CD4-positive, alpha-beta memory T cell (primary cell): ENCODE measurements at regions of chr2 and their contacts with region 1.

Region 1: GRCh38 chr2:191051825-191052778 is 38.1 kb upstream of the STAT1 start:
- DNase-seq: peak in 4 of 5 donors; percentile 52 to 66 (median 62)
- H3K4me3 ChIP-seq: no peak overlapping the region
- H3K4me3 Mint-ChIP-seq: no peak overlapping the region
- H3K27ac ChIP-seq: no peak overlapping the region
- H3K27ac Mint-ChIP-seq: no peak overlapping the region
- H3K4me1 ChIP-seq: peaks cover 28% of the 10 kb centered on the region
- H3K4me1 Mint-ChIP-seq: peaks cover 15 to 23% (median 20%) of the 10 kb centered on the region in 4 donors
- H3K27me3 ChIP-seq: no peaks in the 10 kb centered on the region
- H3K27me3 Mint-ChIP-seq: no peaks in the 10 kb centered on the region

Region 2: DNA sequence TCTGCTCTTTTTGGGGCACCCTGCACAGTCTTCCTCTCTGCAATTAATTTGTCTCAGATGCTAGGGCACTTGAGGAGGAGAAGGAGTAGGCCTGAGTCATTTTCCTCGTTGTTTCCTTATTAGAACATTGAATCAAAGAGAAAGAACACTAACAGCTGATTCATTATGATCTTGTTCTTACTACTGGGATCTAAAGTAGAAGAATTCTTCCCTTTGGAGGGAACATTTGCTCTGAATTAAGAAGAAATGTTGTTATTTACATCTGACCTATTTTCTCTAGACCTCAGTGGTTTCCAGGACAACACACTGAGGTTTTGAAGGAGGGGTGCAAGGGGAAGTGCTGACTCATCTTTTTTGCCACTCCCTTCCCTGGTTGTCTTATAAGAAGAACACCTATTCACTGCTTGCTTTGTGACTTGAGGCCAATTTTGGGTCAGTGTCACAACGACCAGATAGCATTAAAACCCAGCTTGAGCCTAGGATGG is 13.8 kb before region 1 on chr2:
- CTCF ChIA-PET with region 1: interaction called, 60 read pairs
- POLR2A ChIA-PET with region 1: interaction called, 17 read pairs
- intact Hi-C with region 1: no loop called
- DNase-seq: peak; percentile 49 to 75 (median 63)
- H3K4me3 ChIP-seq: no peak overlapping the region
- H3K4me3 Mint-ChIP-seq: peak overlapping the region in 7 of 8 donors; percentile 33 to 84 (median 65)
- H3K27ac ChIP-seq: peak overlapping the region; percentile 39
- H3K27ac Mint-ChIP-seq: peak overlapping the region; percentile 87 to 98 (median 91)
- H3K4me1 ChIP-seq: peaks cover 31% of the 10 kb centered on the region
- H3K4me1 Mint-ChIP-seq: peaks cover 27 to 37% (median 36%) of the 10 kb centered on the region in 4 donors
- H3K27me3 ChIP-seq: no peaks in the 10 kb centered on the region
- H3K27me3 Mint-ChIP-seq: no peaks in the 10 kb centered on the region

Region 3: DNA sequence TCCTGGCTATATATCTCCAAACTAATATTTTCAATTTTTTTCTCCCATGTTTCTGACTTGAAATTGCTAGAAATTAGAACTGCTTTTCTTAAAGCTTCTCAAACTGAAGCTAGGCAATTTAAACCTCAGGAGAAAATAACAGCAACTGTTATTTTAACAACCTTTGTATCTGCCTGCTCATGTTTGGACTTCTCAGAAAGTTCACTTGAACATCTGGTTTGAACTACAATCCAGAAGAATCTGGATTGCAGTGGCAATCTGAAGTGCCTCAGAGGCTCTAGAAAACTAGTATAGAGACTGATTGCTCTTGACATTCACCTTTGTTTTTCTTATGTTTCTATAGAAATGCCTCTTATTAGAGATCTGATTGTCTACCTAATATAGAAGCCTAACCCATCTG is 34.6 kb after region 1 on chr2:
- CTCF ChIA-PET with region 1: interaction called, 29 read pairs
- POLR2A ChIA-PET with region 1: interaction called, 3 read pairs
- intact Hi-C with region 1: no loop called
- DNase-seq: no peak
- H3K4me3 ChIP-seq: no peak overlapping the region
- H3K4me3 Mint-ChIP-seq: peak overlapping the region in 1 of 8 donors; percentile 5
- H3K27ac ChIP-seq: no peak overlapping the region
- H3K27ac Mint-ChIP-seq: no peak overlapping the region
- H3K4me1 ChIP-seq: peaks cover 16% of the 10 kb centered on the region
- H3K4me1 Mint-ChIP-seq: peaks cover 19 to 41% (median 33%) of the 10 kb centered on the region in 4 donors
- H3K27me3 ChIP-seq: no peaks in the 10 kb centered on the region
- H3K27me3 Mint-ChIP-seq: no peaks in the 10 kb centered on the region

Region 4: GRCh38 chr2:191128172-191128910 is 76.2 kb after region 1 on chr2:
- CTCF ChIA-PET with region 1: interaction called, 11 read pairs
- POLR2A ChIA-PET with region 1: no interaction called
- intact Hi-C with region 1: no loop called
- DNase-seq: peak in 1 of 5 donors; percentile 37
- H3K4me3 ChIP-seq: no peak overlapping the region
- H3K4me3 Mint-ChIP-seq: peak overlapping the region in 7 of 8 donors; percentile 38 to 68 (median 59)
- H3K27ac ChIP-seq: peak overlapping the region; percentile 14
- H3K27ac Mint-ChIP-seq: peak overlapping the region; percentile 60 to 92 (median 88)
- H3K4me1 ChIP-seq: peaks cover 45% of the 10 kb centered on the region
- H3K4me1 Mint-ChIP-seq: peaks cover 45 to 71% (median 60%) of the 10 kb centered on the region in 4 donors
- H3K27me3 ChIP-seq: no peaks in the 10 kb centered on the region
- H3K27me3 Mint-ChIP-seq: no peaks in the 10 kb centered on the region

Region 5: GRCh38 chr2:191165176-191165643 is 113.1 kb after region 1 on chr2:
- CTCF ChIA-PET with region 1: interaction called, 162 read pairs
- POLR2A ChIA-PET with region 1: interaction called, 3 read pairs
- intact Hi-C with region 1: no loop called
- DNase-seq: peak in 4 of 5 donors; percentile 45 to 57 (median 48)
- H3K4me3 ChIP-seq: no peak overlapping the region
- H3K4me3 Mint-ChIP-seq: no peak overlapping the region
- H3K27ac ChIP-seq: no peak overlapping the region
- H3K27ac Mint-ChIP-seq: peak overlapping the region in 2 of 7 donors; percentile 54 to 77
- H3K4me1 ChIP-seq: no peaks in the 10 kb centered on the region
- H3K4me1 Mint-ChIP-seq: peaks cover 5 to 6% (median 6%) of the 10 kb centered on the region in 4 donors
- H3K27me3 ChIP-seq: no peaks in the 10 kb centered on the region
- H3K27me3 Mint-ChIP-seq: peaks cover 0 to under 1% of the 10 kb centered on the region in 2 donors

Region 6: DNA sequence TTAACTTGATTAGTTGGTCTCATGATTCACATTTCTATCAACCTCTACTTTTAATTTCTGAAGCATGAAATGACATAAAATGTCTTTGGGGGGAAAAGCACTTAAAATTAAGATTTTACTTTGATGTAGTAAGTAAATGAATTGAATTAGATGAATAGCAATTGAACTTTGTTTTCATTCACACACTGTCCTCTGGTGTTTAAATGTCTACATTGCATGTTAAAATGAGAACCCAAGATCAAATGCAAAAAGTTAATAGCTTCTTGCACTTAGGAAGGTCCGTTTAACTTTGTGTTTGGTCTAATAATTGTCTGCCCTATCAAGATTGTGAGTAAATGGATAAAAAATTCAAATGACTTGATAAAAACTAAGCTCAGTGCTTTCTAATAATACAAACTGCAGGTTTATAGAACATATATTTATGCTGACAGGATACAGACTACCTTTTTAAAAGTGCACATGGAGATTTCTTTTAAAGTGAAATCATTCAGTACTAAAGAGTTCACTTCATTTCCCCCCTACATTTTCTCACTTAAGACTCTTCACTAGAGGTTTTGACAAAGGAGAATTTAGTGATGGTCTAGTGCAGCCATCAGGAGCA is 469.6 kb after region 1 on chr2:
- CTCF ChIA-PET with region 1: interaction called, 8 read pairs
- POLR2A ChIA-PET with region 1: no interaction called
- intact Hi-C with region 1: loop called (anchors 1 kb)
- DNase-seq: peak in 4 of 5 donors; percentile 20 to 37 (median 24)
- H3K4me3 ChIP-seq: no peak overlapping the region
- H3K4me3 Mint-ChIP-seq: no peak overlapping the region
- H3K27ac ChIP-seq: no peak overlapping the region
- H3K27ac Mint-ChIP-seq: no peak overlapping the region
- H3K4me1 ChIP-seq: no peaks in the 10 kb centered on the region
- H3K4me1 Mint-ChIP-seq: no peaks in the 10 kb centered on the region
- H3K27me3 ChIP-seq: no peaks in the 10 kb centered on the region
- H3K27me3 Mint-ChIP-seq: peaks cover 4 to 5% of the 10 kb centered on the region in 2 donors